ENCODE measurements at regions of chr5 and their contacts with region 1.

Region 1: DNA sequence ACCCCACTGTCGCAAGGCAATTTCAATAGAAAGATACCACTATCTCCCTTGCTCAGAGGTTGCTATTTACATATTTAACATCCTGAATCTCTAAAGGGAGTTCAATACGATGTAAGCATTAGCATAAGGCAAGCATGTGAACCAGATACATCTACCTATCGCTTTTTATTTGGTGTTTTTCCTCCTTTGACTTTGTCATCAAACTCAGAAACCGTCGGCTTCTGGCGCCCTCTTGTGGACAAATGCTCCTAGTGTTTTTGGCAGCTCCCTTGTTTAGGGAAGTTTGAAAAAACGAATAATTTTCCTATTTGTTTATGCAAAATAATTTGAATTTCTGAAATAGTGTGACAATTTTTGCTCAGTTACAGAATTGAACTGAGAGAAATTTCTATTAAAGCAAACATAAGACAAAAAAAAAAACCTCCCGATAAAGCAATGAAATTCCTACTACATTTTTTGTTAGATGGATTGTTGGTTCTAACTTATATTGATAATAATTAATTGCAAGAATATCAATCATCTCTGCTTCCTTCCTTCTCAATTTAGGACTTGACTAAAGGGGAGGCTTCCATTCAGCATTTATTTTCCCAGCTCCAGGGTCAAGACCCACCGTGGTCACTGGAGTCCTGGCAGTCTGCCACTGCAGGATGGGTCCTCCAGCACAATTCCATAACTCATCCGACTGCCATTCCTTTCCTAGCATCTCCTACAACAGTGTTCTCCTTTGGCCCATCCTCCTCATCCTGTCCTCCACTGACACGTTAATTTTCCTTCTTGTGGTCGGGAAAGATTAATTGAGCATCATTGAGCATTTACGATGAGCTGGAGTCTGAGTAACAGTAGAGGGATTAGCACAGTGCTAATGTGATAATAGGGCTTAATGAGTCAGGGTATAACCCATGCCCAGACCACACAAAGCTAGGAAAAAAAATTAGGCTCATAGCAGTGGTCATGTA is 131.8 kb upstream of the CHD1 start:
- DNase-seq: peak; percentile 60
- ATAC-seq: peak; percentile 61
- H3K4me3 Mint-ChIP-seq: peak overlapping the region; percentile 60
- H3K27ac Mint-ChIP-seq: peak overlapping the region; percentile 66
- H3K4me1 Mint-ChIP-seq: peaks cover 48% of the 10 kb centered on the region
- H3K27me3 Mint-ChIP-seq: no peaks in the 10 kb centered on the region
- CTCF ChIP-seq: peak; percentile 51

Region 2: GRCh38 chr5:97231025-97231636 is 1829.5 kb before region 1 on chr5:
- CTCF ChIA-PET with region 1: interaction called, 5 read pairs
- POLR2A ChIA-PET with region 1: no interaction called
- intact Hi-C with region 1: loop called (anchors 5 kb)
- DNase-seq: no peak
- ATAC-seq: peak; percentile 52
- H3K4me3 Mint-ChIP-seq: no peak overlapping the region
- H3K27ac Mint-ChIP-seq: no peak overlapping the region
- H3K4me1 Mint-ChIP-seq: no peaks in the 10 kb centered on the region
- H3K27me3 Mint-ChIP-seq: peaks cover 1% of the 10 kb centered on the region
- CTCF ChIP-seq: peak; percentile 75

Region 3: DNA sequence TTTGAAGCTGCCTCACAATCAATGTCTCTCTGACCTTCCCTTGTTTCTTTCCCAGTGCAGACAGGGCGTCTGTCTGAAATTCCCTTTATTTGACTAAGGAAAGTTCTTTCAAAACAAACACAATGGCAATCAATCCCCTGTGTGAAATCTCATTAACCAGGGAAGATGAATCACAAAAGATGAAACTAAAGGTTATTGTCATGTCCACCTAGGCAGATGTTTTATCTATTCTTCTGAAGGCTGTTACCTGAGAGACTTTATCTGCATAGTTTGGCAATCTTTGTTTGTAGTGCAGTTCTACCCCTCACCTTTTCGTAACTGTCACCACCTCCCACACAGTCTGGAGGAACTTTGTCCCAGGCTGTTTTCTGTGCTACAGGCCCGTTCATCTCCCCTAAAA is 1660.0 kb before region 1 on chr5:
- CTCF ChIA-PET with region 1: no interaction called
- POLR2A ChIA-PET with region 1: no interaction called
- intact Hi-C with region 1: no loop called
- DNase-seq: no peak
- ATAC-seq: no peak
- H3K4me3 Mint-ChIP-seq: no peak overlapping the region
- H3K27ac Mint-ChIP-seq: no peak overlapping the region
- H3K4me1 Mint-ChIP-seq: no peaks in the 10 kb centered on the region
- H3K27me3 Mint-ChIP-seq: peaks cover 2% of the 10 kb centered on the region
- CTCF ChIP-seq: no peak

Region 4: DNA sequence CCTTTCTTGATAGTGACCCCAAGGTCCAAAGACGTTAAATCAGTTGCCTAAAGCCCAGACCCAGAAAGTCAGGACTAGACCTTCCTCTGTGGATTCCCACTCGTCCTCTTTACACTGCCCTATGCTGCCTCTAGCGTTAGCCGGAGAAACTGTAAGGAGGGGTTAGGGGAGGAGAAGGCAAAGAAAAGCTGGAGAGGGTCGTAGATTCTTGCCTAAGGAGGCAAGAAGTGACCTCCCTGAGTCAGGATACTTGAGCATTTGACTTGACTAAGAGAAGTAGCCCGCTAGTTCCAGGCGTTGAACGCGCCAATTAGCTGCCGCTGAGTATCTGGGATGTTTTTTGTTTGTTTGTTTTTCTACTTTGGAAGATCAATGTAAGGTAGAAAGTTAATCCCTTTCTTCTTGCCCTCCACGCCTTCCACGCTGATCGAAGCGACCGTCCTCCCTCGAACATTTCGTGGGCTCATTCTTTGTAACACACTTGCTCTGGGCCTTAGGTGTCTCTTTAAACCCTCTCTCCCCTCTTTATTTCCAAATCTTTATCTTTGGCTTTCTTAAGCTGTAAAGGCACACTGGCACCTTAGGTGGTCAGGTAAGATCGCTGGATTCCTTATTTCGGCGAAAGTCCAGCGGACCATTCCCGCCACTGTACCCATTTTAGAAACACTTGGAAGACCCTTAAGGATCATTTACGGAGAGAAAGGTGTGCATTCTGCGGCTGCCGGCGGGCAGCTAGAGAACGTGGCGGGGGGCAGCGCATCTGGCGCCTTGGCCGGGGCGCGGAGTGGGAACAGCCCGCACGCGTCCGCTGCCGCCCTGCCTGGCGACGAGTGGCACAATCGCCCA is 292.2 kb before region 1 on chr5:
- CTCF ChIA-PET with region 1: interaction called, 4 read pairs
- POLR2A ChIA-PET with region 1: no interaction called
- intact Hi-C with region 1: loop called (anchors 1 kb)
- DNase-seq: peak; percentile 28
- ATAC-seq: peak; percentile 28
- H3K4me3 Mint-ChIP-seq: peak overlapping the region; percentile 96
- H3K27ac Mint-ChIP-seq: no peak overlapping the region
- H3K4me1 Mint-ChIP-seq: peaks cover 40% of the 10 kb centered on the region
- H3K27me3 Mint-ChIP-seq: peaks cover 29% of the 10 kb centered on the region
- CTCF ChIP-seq: no peak

Region 5: GRCh38 chr5:98905857-98906690 is 154.5 kb before region 1 on chr5:
- CTCF ChIA-PET with region 1: interaction called, 44 read pairs
- POLR2A ChIA-PET with region 1: interaction called, 12 read pairs
- intact Hi-C with region 1: loop called (anchors 1 kb)
- DNase-seq: no peak
- ATAC-seq: peak; percentile 69
- H3K4me3 Mint-ChIP-seq: no peak overlapping the region
- H3K27ac Mint-ChIP-seq: peak overlapping the region; percentile 1
- H3K4me1 Mint-ChIP-seq: peaks cover 34% of the 10 kb centered on the region
- H3K27me3 Mint-ChIP-seq: no peaks in the 10 kb centered on the region
- CTCF ChIP-seq: peak; percentile 94

Region 6: DNA sequence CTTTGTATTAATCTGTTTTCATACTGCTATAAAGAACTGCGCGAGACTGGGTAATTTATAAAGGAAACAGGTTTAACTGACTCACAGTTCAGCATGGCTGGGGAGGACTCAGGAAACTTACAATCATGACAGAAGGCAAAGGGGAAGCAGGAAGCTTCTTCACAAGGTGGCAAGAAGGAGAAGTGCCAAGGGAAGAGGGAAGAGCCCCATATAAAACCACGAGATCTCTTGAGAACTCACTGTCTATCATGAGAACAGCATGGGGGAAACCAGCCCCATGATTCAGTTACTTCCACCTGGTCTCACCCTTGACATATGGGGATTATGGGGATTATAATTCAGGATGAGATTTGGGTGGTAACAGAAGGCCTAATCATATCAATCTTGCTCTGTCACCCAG is 70.9 kb before region 1 on chr5:
- CTCF ChIA-PET with region 1: interaction called, 4 read pairs
- POLR2A ChIA-PET with region 1: interaction called, 10 read pairs
- intact Hi-C with region 1: no loop called
- DNase-seq: no peak
- ATAC-seq: no peak
- H3K4me3 Mint-ChIP-seq: no peak overlapping the region
- H3K27ac Mint-ChIP-seq: peak overlapping the region; percentile 42
- H3K4me1 Mint-ChIP-seq: peaks cover 12% of the 10 kb centered on the region
- H3K27me3 Mint-ChIP-seq: no peaks in the 10 kb centered on the region
- CTCF ChIP-seq: no peak

Region 7: GRCh38 chr5:99004960-99005359 is 55.6 kb before region 1 on chr5:
- CTCF ChIA-PET with region 1: no interaction called
- POLR2A ChIA-PET with region 1: interaction called, 5 read pairs
- intact Hi-C with region 1: loop called (anchors 2 kb)
- DNase-seq: no peak
- ATAC-seq: peak; percentile 98
- H3K4me3 Mint-ChIP-seq: peak overlapping the region; percentile 44
- H3K27ac Mint-ChIP-seq: peak overlapping the region; percentile 56
- H3K4me1 Mint-ChIP-seq: peaks cover 28% of the 10 kb centered on the region
- H3K27me3 Mint-ChIP-seq: no peaks in the 10 kb centered on the region
- CTCF ChIP-seq: no peak

Region 8: DNA sequence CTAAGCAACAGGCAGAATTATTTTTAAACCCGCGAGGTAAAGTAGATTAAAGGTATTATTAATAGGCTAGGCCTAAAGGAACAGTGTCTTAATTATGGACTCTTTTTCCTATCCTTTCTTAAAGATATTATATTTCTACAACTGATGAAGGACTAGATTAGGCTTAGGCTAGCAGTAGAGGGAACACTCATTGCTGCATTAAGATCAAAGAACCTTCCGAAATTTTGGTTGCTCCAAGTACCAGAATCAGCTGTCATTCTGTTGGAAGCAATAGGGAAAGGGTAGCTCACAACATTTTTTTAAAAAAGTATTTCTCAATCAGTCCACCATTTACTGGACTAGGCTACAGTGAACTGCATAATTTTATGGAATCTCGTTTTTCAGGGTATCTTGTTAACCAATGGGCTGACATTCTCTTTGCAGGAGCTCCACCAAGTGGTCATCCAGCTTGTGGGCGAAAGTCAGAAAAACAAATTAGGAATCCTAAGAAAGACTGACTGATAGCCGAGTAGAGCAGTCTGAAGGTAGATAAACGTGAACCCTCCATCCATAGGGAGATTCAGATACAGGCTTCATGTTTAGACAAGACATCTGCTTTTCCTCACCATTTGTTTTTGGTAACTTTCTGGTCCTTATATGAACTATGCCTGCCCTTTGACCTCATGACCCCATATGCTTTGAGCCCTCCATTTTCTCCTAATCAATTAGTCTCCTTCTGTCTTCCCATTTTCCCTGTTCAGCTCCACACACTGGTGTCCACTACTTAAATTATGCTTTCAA is 28.2 kb before region 1 on chr5:
- CTCF ChIA-PET with region 1: interaction called, 34 read pairs
- POLR2A ChIA-PET with region 1: interaction called, 3 read pairs
- intact Hi-C with region 1: loop called (anchors 1 kb)
- DNase-seq: no peak
- ATAC-seq: peak; percentile 32
- H3K4me3 Mint-ChIP-seq: peak overlapping the region; percentile 81
- H3K27ac Mint-ChIP-seq: peak overlapping the region; percentile 84
- H3K4me1 Mint-ChIP-seq: peaks cover 85% of the 10 kb centered on the region
- H3K27me3 Mint-ChIP-seq: no peaks in the 10 kb centered on the region
- CTCF ChIP-seq: no peak

Measured in activated B cell treated with CpG ODN at 0.5 μM for 24 hours (primary cell).